Activated CD8-positive, alpha-beta T cell treated with anti-CD3 and anti-CD28 coated beads, Interleukin-2, amount 10 ng/mL, durations not matched to agents 7 days and 5 days (primary cell): ENCODE measurements at regions of chr1 and their contacts with region 1.

Region 1: GRCh38 chr1:206834711-206835110 is 30.7 kb upstream of the IL20 start:
- DNase-seq: no peak
- ATAC-seq: no peak
- H3K4me3 Mint-ChIP-seq: no peak overlapping the region
- H3K27ac Mint-ChIP-seq: no peak overlapping the region
- H3K4me1 Mint-ChIP-seq: peaks cover 48% of the 10 kb centered on the region
- H3K27me3 Mint-ChIP-seq: peaks cover 25% of the 10 kb centered on the region

Region 2: GRCh38 chr1:206816390-206817287 is 18.1 kb before region 1 on chr1:
- CTCF ChIA-PET with region 1: interaction called, 118 read pairs
- POLR2A ChIA-PET with region 1: interaction called, 8 read pairs
- DNase-seq: peak; percentile 55
- ATAC-seq: peak; percentile 92
- H3K4me3 Mint-ChIP-seq: peak overlapping the region; percentile 13
- H3K27ac Mint-ChIP-seq: peak overlapping the region; percentile 89
- H3K4me1 Mint-ChIP-seq: peaks cover 44% of the 10 kb centered on the region
- H3K27me3 Mint-ChIP-seq: no peaks in the 10 kb centered on the region

Region 3: DNA sequence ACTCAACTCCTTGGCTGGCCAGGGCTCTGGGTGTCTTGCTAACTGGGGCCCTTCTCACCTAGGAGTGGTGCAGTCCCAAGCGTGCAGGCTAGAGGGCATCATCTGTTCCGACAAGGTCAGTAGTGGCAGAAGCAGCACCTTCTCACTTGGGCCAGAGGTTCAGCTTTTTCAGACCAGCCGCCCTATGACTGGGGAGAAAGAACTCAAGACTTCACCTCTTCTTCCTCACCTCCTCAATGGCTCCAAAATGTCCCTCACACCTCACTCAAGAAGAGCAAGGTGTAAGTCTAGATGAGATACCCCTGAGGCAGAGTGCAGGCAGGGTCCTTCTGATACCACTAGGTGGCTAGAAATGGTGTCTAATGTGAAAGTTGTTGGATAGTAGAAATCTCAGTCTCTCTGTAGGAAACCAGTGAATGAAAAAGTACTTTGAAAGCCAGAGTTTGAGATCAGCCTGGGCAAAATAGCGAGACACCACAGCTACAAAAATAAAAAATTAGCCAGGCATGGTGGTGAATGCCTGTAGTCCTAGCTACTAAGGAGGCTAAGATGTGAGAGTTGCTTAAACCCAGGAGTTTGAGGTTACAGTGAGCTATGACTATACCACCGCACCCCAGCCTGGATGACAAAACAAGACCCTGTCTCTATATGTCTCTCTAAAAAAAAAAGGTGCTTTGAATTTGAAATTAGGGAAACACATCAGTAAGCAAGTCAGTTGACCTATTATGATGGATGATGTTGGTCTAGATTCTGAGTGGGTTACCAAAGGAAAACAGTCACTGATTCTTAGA is 22.2 kb after region 1 on chr1:
- CTCF ChIA-PET with region 1: interaction called, 12 read pairs
- POLR2A ChIA-PET with region 1: no interaction called
- DNase-seq: no peak
- ATAC-seq: peak; percentile 53
- H3K4me3 Mint-ChIP-seq: no peak overlapping the region
- H3K27ac Mint-ChIP-seq: no peak overlapping the region
- H3K4me1 Mint-ChIP-seq: peaks cover 15% of the 10 kb centered on the region
- H3K27me3 Mint-ChIP-seq: peaks cover 25% of the 10 kb centered on the region

Region 4: GRCh38 chr1:206865013-206865671 is 30.4 kb after region 1 on chr1 and contains the start of gene IL20:
- CTCF ChIA-PET with region 1: interaction called, 17 read pairs
- POLR2A ChIA-PET with region 1: no interaction called
- DNase-seq: peak; percentile 85
- ATAC-seq: peak; percentile 82
- H3K4me3 Mint-ChIP-seq: no peak within 1 kb of the TSS
- H3K27ac Mint-ChIP-seq: no peak within 1 kb of the TSS
- H3K4me1 Mint-ChIP-seq: peaks cover 6% of the 10 kb centered on the region
- H3K27me3 Mint-ChIP-seq: peaks cover 42% of the 10 kb centered on the region
- total RNA-seq, gene IL20: not detected

Region 5: DNA sequence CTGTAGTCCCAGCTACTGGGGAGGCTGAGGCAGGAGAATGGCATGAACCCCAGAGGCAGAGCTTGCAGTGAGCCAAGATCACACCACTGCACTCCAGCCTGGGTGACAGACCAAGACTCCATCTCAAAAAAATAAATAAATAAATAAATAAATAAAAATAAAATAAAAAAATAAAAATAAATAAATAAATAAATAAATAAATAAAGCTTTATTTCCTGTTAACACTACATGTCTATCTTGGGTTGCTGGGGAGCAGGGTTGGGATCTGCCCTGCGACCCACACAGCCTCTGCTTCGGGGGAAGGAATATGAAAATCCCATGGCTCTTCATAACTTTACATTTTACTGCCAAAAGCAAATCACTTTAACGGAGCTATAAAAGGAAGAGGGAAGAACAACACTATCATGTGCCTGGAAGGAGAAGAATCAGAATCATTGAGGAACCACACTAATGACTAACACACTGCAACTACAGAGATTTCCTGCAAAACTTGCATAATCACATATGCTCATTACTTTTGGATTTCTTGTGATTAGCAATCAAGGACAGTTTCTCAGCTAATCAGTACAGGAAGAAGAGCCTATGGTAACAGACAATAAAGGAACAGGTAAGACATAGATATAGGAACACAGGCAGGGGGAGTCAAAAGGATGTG is 414.0 kb after region 1 on chr1:
- CTCF ChIA-PET with region 1: no interaction called
- POLR2A ChIA-PET with region 1: no interaction called
- DNase-seq: no peak
- ATAC-seq: no peak
- H3K4me3 Mint-ChIP-seq: no peak overlapping the region
- H3K27ac Mint-ChIP-seq: no peak overlapping the region
- H3K4me1 Mint-ChIP-seq: peaks cover 16% of the 10 kb centered on the region
- H3K27me3 Mint-ChIP-seq: no peaks in the 10 kb centered on the region